ENCODE measurements at regions of chr16 and their contacts with region 1.

Region 1: GRCh38 chr16:85245307-85246172 is 133.3 kb upstream of the CIBAR2 start:
- DNase-seq: peak; percentile 78
- CTCF ChIP-seq: peak; percentile 67

Region 2: GRCh38 chr16:85227084-85227945 is 18.2 kb before region 1 on chr16:
- CTCF ChIA-PET with region 1: interaction called, 29 read pairs
- POLR2A ChIA-PET with region 1: no interaction called
- DNase-seq: peak; percentile 88
- CTCF ChIP-seq: no peak

Region 3: DNA sequence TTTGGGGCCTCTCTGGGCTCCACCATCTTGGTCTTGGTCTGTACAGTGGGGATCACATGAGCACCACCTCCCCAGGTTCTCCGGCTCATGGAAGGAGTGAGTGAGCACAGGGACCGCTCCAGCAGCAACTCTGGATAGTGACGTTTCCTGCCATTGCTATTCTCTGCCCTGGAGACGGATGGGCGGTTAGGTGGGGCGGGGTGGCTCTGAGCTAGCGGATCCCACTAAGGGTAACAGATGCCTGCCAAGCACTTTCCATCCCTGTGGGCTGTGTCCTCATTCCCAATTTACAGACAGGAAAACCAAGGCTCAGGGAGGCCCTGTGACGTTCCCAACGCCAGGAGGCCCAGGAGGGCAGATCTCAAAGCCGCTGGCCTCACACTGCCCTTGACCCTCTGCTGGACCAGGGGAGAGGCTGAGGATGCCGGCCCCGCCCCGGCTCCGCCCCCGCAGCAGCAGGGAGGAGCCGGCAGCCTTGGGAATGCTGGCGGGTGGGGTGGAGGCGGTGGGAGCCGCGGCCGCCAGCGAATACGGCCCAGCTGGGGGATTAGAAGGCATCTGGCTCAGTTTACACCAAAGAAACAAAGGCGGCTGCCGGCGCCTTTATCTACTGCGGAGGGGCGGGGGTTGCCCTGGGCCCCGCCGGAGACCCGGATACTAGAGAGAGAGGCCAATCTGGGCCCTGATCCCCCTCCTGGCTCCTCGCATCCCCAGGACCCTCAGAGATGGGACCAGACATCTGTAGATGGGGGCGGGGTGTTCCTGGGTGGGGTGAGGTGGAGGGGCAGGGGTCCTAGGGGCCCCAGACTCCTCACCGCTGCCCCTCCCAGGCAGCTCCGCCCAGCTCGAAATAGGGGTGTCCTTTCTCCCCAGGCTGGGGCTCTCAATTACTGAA is 11.0 kb before region 1 on chr16:
- CTCF ChIA-PET with region 1: interaction called, 30 read pairs
- POLR2A ChIA-PET with region 1: no interaction called
- DNase-seq: no peak
- CTCF ChIP-seq: no peak

Region 4: GRCh38 chr16:85258629-85259028 is 13.1 kb after region 1 on chr16:
- CTCF ChIA-PET with region 1: interaction called, 58 read pairs
- POLR2A ChIA-PET with region 1: no interaction called
- DNase-seq: no peak
- CTCF ChIP-seq: no peak

Measured in GM10248 (cell line).